ENCODE measurements at regions of chr9 and their contacts with region 1.

Region 1: GRCh38 chr9:34048923-34049697 is 423 bp upstream of the UBAP2 start:
- DNase-seq: peak; percentile 99
- ATAC-seq: peak; percentile 95

Region 2: DNA sequence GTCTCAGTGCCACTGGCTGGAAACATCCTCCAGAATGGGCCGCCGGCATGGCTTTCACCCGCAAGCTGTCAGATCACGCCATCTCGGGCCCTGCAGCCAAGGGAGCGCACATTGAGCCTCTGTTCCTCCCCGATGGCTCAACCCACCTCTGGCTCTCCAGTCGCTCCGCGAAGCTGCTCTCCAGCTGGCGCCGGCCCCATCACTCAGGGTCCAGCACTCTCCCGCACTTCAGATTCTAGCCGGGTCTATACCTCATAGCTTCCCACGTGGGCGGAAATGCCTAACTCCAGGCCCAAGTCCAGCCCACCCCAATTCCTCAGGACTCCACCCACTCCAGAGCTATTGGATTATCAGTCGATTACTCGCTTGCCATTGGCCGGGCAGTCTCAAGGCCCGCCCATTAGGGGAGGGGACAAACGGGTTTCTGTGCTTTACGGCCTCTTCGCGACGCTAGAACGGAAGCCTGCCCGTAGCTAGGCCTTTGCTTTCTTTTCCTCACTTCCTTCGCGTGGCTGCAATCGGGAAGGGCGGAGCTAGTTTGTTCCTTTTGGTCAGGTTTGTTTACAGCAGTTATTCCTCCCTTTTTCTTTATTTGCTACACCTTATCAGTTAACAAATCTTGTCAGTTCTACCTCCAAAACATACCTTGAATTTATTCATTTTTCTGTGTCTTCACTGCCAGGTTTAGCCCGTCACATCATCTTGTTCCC is 575.3 kb before region 1 on chr9 and contains the start of gene NOL6:
- intact Hi-C with region 1: no loop called
- DNase-seq: peak; percentile 96
- ATAC-seq: peak; percentile 100
- total RNA-seq, gene NOL6: 13.0 TPM

Region 3: DNA sequence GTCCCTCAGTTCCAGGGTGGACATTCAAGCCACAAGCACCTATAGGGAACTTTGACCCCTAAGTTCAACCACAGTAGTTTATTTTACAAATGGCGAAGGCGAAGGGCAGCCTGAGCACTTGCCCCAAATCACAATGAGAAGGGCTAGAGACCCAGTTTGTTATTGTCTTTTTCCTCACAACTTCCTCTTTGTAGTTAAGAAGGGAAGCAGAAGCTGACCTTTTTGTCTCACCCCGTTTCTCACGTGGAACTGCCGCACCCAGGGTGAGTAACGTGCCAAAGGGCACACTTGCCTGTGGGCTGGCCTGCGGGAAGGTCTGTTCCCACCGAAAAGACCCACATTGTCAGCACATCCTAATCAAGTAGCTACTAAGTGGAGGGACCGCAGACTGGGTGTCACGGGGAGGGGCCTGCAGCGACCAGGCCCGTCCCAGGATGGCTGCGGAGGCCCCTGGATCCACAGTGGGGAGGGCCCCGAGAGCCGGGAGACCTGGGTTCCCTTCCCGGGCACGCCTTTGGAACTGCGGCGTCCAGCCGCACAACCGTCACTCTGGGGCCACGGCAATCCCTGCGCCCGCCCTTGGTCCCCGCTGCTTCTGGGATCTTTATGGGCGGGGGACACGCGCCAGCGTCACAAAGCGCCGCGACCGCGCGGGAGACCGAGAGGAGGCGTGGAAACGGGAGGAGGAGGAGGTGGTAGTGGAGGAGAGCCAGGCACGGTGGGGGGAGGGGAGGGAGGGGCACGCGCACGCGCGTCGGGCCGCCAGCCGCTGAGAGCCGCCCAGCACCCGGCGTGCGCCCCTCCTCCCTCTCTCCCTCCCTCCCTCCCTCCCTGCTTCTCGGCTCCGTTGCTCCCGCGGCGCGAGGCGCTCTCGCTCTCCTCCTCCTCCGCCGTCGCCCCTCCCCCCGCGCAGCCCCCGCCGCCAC is 232.5 kb before region 1 on chr9 and contains the start of gene UBE2R2:
- intact Hi-C with region 1: loop called (anchors 10 kb)
- DNase-seq: peak; percentile 97
- ATAC-seq: peak; percentile 90
- total RNA-seq, gene UBE2R2: 44.0 TPM

Region 4: DNA sequence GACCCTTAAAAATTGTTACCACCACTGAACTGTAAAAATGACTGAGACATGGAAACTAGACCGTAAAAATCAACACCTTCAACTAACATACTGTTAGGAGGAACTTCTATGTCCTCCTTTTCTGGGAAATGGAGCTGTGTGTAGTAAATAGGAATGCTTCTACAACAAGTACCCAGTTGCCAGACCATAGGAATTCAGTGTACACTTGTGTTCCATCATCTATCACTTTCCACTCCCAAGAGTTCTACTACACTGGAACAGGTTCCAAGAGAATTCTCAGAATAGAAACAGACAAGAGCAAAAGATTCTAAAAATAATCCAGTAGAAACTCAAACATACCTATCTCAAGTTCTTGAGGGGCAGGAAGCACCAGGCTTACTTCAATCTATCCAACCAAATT is 24.0 kb before region 1 on chr9:
- intact Hi-C with region 1: loop called (anchors 2 kb)
- DNase-seq: no peak
- ATAC-seq: peak; percentile 87

Region 5: GRCh38 chr9:34126207-34127034 is 77.3 kb after region 1 on chr9 and contains the start of gene DCAF12:
- intact Hi-C with region 1: loop called (anchors 5 kb)
- DNase-seq: peak; percentile 95
- ATAC-seq: peak; percentile 97
- total RNA-seq, gene DCAF12: 17.6 TPM

Measured in Right ventricle myocardium inferior (tissue), 1 donor.